Mammary epithelial cell (primary cell): ENCODE measurements at regions of chr2 and their contacts with region 1.

Region 1: DNA sequence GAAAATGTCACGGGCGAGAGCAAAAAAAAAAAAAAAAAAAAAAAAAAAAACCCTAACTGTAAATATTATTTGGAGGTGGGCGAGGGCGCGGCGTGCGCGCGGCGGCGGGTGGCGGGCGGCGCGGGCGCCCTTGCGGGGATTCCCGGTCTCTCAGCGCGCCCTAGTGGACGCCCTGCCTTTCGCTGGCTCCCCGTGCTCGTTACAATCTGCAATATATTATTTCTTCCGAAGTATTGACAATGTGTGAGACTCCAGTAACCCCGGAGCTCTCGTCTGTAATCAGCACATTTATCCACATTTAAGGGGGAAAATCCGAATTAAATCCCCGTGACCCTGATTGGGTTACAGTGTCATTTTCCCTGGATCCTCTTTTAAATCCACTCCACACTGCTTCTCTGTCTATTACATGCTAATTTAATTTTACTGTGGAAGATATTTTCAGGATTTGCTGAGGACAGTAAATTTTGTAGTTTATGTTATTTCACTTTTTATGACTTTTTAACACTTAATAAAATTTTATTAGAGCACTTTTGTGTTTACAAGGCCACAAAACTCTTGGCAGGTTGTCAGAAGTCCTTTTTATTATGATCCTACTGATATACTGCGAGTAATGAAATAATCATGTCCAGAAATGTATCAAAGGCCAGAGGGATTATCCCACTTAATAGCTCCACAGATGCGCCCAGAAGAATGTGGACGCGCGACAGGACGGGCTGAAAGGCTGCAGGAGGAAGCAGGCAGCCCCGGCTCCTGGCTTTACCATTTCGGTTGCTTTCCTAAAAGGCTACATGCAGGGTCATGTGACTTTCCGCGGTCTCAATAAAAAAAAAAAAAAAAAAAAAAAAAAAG is 369.1 kb downstream of the MTX2 start:
- DNase-seq: peak; percentile 43
- H3K4me3 ChIP-seq: peak overlapping the region; percentile 61 to 87 (median 81)
- H3K27ac ChIP-seq: peak overlapping the region; percentile 3
- H3K4me1 ChIP-seq: peaks cover 41% of the 10 kb centered on the region
- H3K27me3 ChIP-seq: peaks cover 3% of the 10 kb centered on the region
- CTCF ChIP-seq: peak; percentile 54 to 64

Region 2: GRCh38 chr2:176126929-176127773 is 511.2 kb before region 1 on chr2:
- CTCF ChIA-PET with region 1: no interaction called
- dilution Hi-C with region 1: loop called (anchors 10 kb)
- in situ Hi-C with region 1: loop called (anchors 5 to 10 kb)
- intact Hi-C with region 1: loop called (anchors 1 kb)
- DNase-seq: no peak
- H3K4me3 ChIP-seq: no peak overlapping the region
- H3K27ac ChIP-seq: no peak overlapping the region
- H3K4me1 ChIP-seq: peaks cover 8% of the 10 kb centered on the region
- H3K27me3 ChIP-seq: peaks cover 88% of the 10 kb centered on the region
- CTCF ChIP-seq: peak; percentile 74

Region 3: DNA sequence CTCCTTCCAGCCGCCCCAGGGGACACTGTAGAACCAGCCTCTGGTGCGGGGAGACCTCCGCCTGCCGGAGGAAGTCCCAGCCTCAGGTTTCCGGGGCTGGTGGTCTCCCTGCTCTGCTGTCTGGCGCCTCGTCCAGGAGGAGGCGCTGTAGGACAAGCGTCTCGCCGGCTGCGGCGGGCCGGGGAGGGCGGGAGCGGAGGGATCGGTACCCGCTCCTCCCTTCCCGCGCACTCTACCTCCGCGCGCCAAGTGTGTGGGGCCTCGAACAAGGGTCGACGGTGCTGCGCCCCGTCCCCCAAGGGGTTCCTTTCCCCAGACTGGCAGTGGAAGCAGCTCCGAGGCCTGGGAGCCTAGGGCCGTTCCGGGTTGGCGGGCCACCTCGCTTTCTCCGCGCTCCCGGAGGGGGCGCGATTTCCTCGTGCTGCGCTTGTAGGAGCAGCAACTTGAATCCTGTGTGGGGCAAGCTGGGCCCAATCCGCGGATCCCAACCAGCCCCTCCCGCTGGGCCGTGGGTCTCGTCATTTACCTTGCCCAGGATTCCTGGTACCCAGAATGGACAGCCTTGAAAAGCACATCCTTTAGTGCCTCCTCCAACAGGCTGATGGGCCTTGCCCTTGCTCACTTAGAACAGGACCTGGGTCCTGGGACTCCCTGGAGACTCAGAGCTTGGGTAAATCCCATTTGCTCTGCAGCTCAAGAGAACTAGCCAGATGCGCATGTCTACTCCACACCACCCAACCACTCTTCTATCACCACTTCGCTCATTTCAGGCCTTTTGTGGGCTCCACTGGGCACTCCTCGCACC is 497.7 kb before region 1 on chr2:
- CTCF ChIA-PET with region 1: no interaction called
- dilution Hi-C with region 1: loop called (anchors 10 kb)
- in situ Hi-C with region 1: no loop called
- intact Hi-C with region 1: loop called (anchors 1 kb)
- DNase-seq: peak; percentile 53
- H3K4me3 ChIP-seq: peak overlapping the region; percentile 65 to 74 (median 70)
- H3K27ac ChIP-seq: no peak overlapping the region
- H3K4me1 ChIP-seq: peaks cover 15% of the 10 kb centered on the region
- H3K27me3 ChIP-seq: peaks cover 29% of the 10 kb centered on the region
- CTCF ChIP-seq: peak; percentile 57 to 87

Region 4: DNA sequence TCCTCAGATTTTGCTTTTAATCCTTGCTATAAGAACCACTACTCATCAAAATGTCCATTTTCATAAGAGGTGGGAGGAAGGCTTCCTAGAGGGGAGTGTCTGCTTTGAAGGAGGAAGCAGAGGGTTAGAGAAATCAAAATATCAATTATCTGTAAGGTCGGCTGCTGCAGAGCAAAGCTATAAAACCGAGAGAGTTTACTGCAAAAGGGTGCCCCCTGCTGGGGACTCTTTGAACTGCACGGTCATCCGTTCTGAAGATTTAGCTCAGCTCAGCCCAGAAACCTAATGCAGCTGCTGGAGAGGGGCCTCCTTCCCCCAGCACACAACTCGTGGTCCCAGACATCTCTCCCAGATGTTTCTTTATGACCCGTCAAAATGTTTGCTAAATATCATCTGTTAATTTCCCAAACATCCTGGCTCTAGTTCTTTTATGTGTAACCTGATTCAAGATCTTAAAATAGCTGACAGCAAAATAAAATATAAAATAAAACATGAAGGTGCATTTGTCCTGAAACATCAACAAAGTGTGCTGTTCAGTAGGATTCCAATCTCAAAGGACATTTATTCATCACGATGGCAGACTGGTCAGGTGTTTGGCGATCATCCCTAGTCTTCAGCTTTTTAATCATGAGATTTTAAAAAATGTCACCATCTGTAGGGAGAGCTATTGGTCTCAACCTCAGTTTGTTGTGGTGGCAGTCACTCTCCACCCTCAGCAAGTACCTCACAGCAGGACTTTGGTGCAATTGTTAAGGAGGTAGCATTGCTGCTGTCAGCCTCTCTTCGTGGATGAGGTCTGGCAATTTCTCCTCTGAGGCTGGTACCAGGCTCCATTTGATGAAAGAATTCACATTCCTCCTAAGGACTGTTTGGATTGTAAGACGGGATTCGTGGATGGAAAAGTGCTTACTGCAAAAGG is 183.2 kb before region 1 on chr2:
- CTCF ChIA-PET with region 1: interaction called, 6 read pairs
- dilution Hi-C with region 1: no loop called
- in situ Hi-C with region 1: loop called in 1 of 2 experiments (anchors 25 kb)
- intact Hi-C with region 1: loop called (anchors 1 kb)
- DNase-seq: peak; percentile 31
- H3K4me3 ChIP-seq: no peak overlapping the region
- H3K27ac ChIP-seq: no peak overlapping the region
- H3K4me1 ChIP-seq: no peaks in the 10 kb centered on the region
- H3K27me3 ChIP-seq: no peaks in the 10 kb centered on the region
- CTCF ChIP-seq: peak; percentile 86 to 94

Region 5: GRCh38 chr2:176565641-176566323 is 72.6 kb before region 1 on chr2:
- CTCF ChIA-PET with region 1: no interaction called
- dilution Hi-C with region 1: no loop called
- in situ Hi-C with region 1: no loop called
- intact Hi-C with region 1: no loop called
- DNase-seq: no peak
- H3K4me3 ChIP-seq: no peak overlapping the region
- H3K27ac ChIP-seq: no peak overlapping the region
- H3K4me1 ChIP-seq: no peaks in the 10 kb centered on the region
- H3K27me3 ChIP-seq: peaks cover 4% of the 10 kb centered on the region
- CTCF ChIP-seq: no peak

Region 6: GRCh38 chr2:176613323-176613987 is 24.9 kb before region 1 on chr2:
- CTCF ChIA-PET with region 1: no interaction called
- dilution Hi-C with region 1: no loop called
- in situ Hi-C with region 1: no loop called
- intact Hi-C with region 1: no loop called
- DNase-seq: peak; percentile 1
- H3K4me3 ChIP-seq: no peak overlapping the region
- H3K27ac ChIP-seq: no peak overlapping the region
- H3K4me1 ChIP-seq: peaks cover 31% of the 10 kb centered on the region
- H3K27me3 ChIP-seq: no peaks in the 10 kb centered on the region
- CTCF ChIP-seq: no peak

Region 7: DNA sequence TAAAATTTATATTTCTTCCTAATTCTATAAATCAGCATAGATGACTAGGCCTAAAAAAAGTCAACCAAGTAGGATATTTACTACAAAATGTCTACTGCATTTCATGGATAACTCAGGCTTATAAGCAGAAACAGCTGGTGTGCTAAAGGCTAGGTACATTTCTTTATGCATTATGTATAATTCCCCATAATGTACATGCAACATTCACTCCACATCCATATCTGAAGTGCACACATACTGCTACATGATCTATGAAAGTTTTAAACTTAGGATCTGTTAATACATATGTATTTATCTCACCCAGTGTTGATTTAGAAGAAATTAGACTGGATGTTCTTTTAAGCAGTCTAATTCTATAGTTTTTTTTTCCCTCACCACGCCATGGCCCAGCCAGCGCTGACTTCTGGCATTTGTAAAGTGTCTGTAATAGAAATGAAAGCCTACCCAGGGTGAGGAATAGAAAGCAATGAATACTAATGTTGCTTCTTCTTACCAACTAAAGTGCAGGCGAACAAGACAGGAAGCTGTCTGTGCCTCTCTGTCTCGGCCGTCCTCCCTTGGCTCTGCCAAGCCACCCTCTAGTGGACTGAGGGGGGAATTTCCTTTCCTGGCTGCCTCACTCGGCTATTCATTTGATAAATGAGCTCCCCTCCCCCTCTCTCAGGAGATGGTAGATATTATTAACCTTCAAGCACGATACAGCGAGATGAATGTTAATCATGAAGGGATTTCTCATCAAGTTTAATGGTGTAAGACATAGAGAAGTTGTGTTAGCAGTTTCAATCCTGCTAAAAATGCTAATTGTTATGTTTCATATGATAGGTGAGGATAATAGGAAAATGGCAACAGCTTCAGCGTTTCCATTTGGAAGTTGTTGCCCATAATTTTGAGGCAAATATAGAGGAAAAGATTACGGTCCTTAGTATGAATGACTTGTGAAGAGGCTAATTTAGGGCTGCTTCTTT is 15.4 kb after region 1 on chr2:
- CTCF ChIA-PET with region 1: interaction called, 12 read pairs
- dilution Hi-C with region 1: no loop called
- in situ Hi-C with region 1: no loop called
- intact Hi-C with region 1: no loop called
- DNase-seq: peak; percentile 67
- H3K4me3 ChIP-seq: no peak overlapping the region
- H3K27ac ChIP-seq: no peak overlapping the region
- H3K4me1 ChIP-seq: no peaks in the 10 kb centered on the region
- H3K27me3 ChIP-seq: peaks cover 3% of the 10 kb centered on the region
- CTCF ChIP-seq: peak; percentile 79 to 89